ENCODE measurements at regions of chr1 and their contacts with region 1.

Region 1: DNA sequence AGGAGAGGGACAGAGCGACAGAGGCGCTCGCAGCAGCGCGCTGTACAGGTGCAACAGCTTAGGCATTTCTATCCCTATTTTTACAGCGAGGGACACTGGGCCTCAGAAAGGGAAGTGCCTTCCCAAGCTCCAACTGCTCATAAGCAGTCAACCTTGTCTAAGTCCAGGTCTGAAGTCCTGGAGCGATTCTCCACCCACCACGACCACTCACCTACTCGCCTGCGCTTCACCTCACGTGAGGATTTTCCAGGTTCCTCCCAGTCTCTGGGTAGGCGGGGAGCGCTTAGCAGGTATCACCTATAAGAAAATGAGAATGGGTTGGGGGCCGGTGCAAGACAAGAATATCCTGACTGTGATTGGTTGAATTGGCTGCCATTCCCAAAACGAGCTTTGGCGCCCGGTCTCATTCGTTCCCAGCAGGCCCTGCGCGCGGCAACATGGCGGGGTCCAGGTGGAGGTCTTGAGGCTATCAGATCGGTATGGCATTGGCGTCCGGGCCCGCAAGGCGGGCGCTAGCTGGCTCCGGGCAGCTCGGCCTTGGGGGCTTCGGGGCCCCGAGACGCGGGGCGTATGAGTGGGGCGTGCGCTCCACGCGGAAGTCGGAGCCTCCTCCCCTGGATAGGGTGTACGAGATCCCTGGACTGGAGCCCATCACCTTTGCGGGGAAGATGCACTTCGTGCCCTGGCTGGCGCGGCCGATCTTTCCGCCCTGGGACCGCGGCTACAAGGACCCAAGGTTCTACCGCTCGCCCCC is at the starts of genes CYB5RL and MRPL37:
- DNase-seq: peak; percentile 89
- H3K4me3 Mint-ChIP-seq: peak within 1 kb of the TSS; percentile 90
- H3K27ac Mint-ChIP-seq: peak within 1 kb of the TSS; percentile 60
- H3K4me1 Mint-ChIP-seq: peaks cover 40% of the 10 kb centered on the region
- H3K27me3 Mint-ChIP-seq: no peaks in the 10 kb centered on the region
- total RNA-seq, gene CYB5RL: 8.3 and 11.3 TPM in 2 replicates
- total RNA-seq, gene MRPL37: 145 and 150 TPM in 2 replicates

Region 2: GRCh38 chr1:54230507-54231339 is 30.8 kb after region 1 on chr1:
- intact Hi-C with region 1: loop called (anchors 1 kb)
- DNase-seq: no peak
- H3K4me3 Mint-ChIP-seq: no peak overlapping the region
- H3K27ac Mint-ChIP-seq: peak overlapping the region; percentile 86
- H3K4me1 Mint-ChIP-seq: peaks cover 27% of the 10 kb centered on the region
- H3K27me3 Mint-ChIP-seq: no peaks in the 10 kb centered on the region

Region 3: GRCh38 chr1:54400329-54400728 is 200.4 kb after region 1 on chr1:
- intact Hi-C with region 1: loop called (anchors 2 kb)
- DNase-seq: no peak
- H3K4me3 Mint-ChIP-seq: peak overlapping the region; percentile 68
- H3K27ac Mint-ChIP-seq: peak overlapping the region; percentile 88
- H3K4me1 Mint-ChIP-seq: peaks cover 88% of the 10 kb centered on the region
- H3K27me3 Mint-ChIP-seq: no peaks in the 10 kb centered on the region

Region 4: DNA sequence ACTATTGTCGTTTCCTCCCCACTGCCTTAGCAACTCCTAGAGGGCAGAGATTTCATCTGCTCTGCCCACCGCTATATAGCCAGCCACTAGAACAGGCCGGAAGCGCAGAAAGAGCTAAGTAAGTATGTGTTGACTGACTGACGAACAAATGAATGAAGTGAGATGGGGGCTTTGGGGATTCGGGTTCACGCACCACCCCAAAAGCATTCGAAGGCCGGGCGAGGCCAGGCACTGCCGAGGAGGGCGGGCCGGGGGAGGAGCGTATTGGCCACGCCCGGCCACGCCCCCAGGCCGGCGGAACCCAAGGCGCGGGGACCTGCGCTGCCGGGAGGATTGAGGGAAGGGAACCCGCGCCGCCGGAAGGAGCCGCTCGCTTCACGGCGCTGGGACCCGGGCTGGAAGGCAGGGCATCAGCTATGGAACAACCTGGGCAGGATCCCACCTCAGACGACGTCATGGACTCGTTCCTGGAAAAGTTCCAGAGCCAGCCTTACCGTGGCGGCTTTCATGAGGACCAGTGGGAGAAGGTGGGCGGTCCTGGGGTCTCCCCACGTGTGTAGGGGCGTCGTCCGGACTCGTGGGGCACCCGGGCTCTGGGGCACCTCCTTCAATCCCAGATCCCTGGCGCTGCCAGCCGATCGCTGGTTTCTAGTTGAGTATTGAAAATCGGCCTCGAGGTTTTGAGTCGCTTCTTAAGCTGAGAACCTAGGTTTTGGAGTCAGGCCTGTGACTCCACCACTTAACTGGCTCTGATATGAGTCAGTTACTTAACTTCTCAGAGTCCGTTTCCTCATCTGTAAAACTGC is 515.8 kb after region 1 on chr1 and contains the start of gene TTC4:
- intact Hi-C with region 1: loop called (anchors 2 kb)
- DNase-seq: peak; percentile 84
- H3K4me3 Mint-ChIP-seq: peak within 1 kb of the TSS; percentile 94
- H3K27ac Mint-ChIP-seq: peak within 1 kb of the TSS; percentile 77
- H3K4me1 Mint-ChIP-seq: peaks cover 31% of the 10 kb centered on the region
- H3K27me3 Mint-ChIP-seq: peaks cover 6% of the 10 kb centered on the region
- total RNA-seq, gene TTC4: 43.7 TPM in 2 replicates

Region 5: GRCh38 chr1:54886724-54887664 is 687.1 kb after region 1 on chr1 and contains the start of gene DHCR24:
- intact Hi-C with region 1: loop called (anchors 5 kb)
- DNase-seq: peak; percentile 85
- H3K4me3 Mint-ChIP-seq: peak within 1 kb of the TSS; percentile 96
- H3K27ac Mint-ChIP-seq: peak within 1 kb of the TSS; percentile 87
- H3K4me1 Mint-ChIP-seq: peaks cover 56% of the 10 kb centered on the region
- H3K27me3 Mint-ChIP-seq: peaks cover 10% of the 10 kb centered on the region
- total RNA-seq, gene DHCR24: 206 and 211 TPM in 2 replicates